ENCODE measurements at regions of chr22 and their contacts with region 1.

Region 1: GRCh38 chr22:23716811-23717801 is 26.3 kb downstream of the RGL4 start:
- DNase-seq: peak; percentile 89
- ATAC-seq: peak; percentile 90
- H3K4me3 Mint-ChIP-seq: peak overlapping the region; percentile 73
- H3K27ac Mint-ChIP-seq: peak overlapping the region; percentile 73
- H3K4me1 Mint-ChIP-seq: peaks cover 24% of the 10 kb centered on the region
- H3K27me3 Mint-ChIP-seq: no peaks in the 10 kb centered on the region

Region 2: DNA sequence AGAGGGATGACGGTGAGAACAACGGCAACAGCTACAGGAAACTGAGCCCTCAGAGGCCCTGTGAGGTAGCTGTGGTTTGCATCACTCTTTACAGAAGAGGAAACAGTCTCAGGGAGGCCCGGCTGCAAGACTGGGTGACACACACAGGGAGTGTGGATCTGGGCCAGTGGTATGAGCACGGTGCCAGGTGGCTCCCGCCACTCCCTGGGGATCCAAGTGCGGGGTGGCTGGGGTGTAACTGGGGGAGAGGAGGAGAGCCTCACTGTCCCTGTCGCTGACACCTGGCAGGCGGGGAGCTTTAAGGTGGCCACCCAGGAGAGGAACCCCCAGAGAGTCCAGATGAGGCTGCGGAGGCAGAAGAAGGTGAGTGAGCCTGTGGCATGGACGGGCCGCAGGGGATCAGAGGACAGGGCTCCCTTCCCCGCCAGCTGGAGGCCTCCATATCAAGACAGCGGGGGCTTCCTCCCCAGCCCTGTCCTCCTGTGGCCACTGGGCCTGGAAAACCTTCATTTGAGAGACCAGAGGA is 20.7 kb before region 1 on chr22:
- CTCF ChIA-PET with region 1: interaction called, 6 read pairs
- POLR2A ChIA-PET with region 1: interaction called, 3 read pairs
- intact Hi-C with region 1: loop called (anchors 1 kb)
- DNase-seq: peak; percentile 91
- ATAC-seq: peak; percentile 100
- H3K4me3 Mint-ChIP-seq: peak overlapping the region; percentile 90
- H3K27ac Mint-ChIP-seq: peak overlapping the region; percentile 100
- H3K4me1 Mint-ChIP-seq: peaks cover 47% of the 10 kb centered on the region
- H3K27me3 Mint-ChIP-seq: no peaks in the 10 kb centered on the region

Region 3: DNA sequence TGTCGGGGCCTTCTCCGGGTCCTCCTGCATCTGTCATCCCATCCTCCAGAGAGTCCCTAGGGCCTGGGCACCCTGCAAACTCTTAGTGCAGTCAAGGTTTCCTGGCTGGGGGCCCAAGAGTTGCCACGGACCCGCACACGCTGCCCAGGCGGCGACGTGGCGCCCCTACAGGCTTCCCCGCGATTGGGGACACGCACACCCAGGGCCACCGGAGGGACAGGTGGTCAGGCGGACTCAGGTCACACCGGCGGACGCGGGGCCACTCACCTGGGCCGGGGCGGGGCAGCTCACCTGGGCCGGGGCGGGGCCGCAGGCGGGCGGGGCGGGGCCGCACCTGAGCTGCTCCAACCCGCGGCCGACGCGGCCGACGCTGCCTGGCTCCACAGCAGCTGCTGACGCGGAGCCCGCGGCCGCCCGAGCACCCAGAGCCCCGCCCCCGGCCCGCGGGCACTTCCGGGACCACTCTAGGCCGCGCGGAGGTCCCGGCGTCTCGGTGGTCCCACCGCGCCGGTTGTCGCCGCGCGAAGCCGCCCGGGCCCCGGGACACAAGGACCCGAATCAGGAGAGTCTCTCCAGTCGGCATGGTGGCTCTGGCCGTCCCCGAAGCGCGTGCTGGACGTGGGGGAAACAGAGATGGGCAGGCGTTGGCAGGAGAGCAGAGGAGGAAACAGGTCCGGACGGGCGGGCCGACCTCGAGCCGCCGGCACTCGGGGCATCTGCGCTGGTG is 33.8 kb after region 1 on chr22 and contains the start of gene ZNF70:
- CTCF ChIA-PET with region 1: no interaction called
- POLR2A ChIA-PET with region 1: interaction called, 6 read pairs
- intact Hi-C with region 1: loop called in 1 of 2 experiments (anchors 1 kb)
- DNase-seq: peak; percentile 91
- ATAC-seq: peak; percentile 99
- H3K4me3 Mint-ChIP-seq: peak within 1 kb of the TSS; percentile 77
- H3K27ac Mint-ChIP-seq: peak within 1 kb of the TSS; percentile 56
- H3K4me1 Mint-ChIP-seq: peaks cover 11% of the 10 kb centered on the region
- H3K27me3 Mint-ChIP-seq: peaks cover 2% of the 10 kb centered on the region
- total RNA-seq, gene ZNF70: 1.6 to 1.7 TPM

Region 4: DNA sequence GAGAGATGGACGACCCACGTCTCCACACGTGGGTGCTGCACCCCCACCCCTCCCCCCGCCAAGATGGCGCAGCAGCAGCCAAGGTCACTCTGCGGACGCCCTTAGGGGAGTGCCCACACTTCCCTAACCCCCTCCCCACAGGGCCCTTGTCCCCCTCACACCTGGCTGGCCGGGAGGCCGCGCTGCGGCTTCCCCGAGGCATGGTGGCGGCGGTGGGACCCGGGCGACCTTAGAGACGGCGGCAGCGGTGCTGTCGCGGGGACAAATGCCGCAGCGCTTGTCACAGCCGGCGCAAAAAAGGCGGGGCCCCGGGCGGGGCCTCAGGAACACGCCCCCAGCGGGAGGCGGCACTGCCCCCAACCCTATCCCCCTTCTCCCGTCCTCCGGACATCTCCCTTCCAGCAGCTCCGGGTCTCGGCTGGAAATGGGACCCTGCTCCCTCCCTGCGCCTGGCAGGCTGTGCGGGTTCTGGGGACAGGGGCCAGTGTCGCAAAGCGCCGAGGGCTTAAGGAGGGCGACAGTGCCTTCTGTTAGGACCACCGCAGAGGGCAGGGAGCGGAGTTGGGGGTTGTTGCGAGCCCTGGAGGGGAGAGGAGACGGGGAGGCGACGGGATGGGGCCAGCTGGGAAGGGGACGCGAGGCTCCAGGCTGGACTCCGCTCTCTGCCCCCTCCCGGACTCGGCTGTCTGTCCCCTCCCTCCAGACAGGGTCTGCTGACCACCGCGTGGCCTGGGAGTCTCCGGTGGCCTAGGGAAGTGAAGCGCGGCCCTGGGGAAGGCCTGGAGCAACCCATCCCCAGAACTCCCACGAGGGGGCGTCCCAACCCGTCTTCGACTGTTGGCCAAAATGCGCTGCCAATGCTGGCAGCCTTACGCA is 50.8 kb after region 1 on chr22 and contains the start of gene CHCHD10:
- CTCF ChIA-PET with region 1: interaction called, 4 read pairs
- POLR2A ChIA-PET with region 1: no interaction called
- intact Hi-C with region 1: loop called in 1 of 2 experiments (anchors 1 kb)
- DNase-seq: peak; percentile 87
- ATAC-seq: peak; percentile 66
- H3K4me3 Mint-ChIP-seq: peak within 1 kb of the TSS; percentile 75
- H3K27ac Mint-ChIP-seq: peak within 1 kb of the TSS; percentile 72
- H3K4me1 Mint-ChIP-seq: peaks cover 36% of the 10 kb centered on the region
- H3K27me3 Mint-ChIP-seq: no peaks in the 10 kb centered on the region
- total RNA-seq, gene CHCHD10: 131 to 134 TPM

Region 5: DNA sequence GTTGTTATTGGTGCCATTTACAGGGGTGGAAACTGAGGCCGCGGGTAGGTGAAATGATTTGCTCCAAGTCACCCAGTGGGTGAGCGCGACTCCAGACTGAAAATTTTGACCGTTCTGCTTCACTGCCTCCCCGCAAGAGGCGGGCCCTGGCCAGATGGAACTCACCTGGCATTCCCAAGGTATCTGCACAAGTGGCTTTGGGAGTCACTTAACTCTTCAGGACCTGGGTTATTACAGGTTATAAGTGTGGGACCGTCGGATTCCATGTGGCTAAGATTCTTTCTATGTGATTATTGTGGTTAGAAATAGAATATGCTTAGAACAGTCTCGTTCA is 294.6 kb after region 1 on chr22:
- CTCF ChIA-PET with region 1: no interaction called
- POLR2A ChIA-PET with region 1: no interaction called
- intact Hi-C with region 1: loop called in 1 of 2 experiments (anchors 10 kb)
- DNase-seq: no peak
- ATAC-seq: no peak
- H3K4me3 Mint-ChIP-seq: peak overlapping the region; percentile 92
- H3K27ac Mint-ChIP-seq: peak overlapping the region; percentile 94
- H3K4me1 Mint-ChIP-seq: peaks cover 27% of the 10 kb centered on the region
- H3K27me3 Mint-ChIP-seq: no peaks in the 10 kb centered on the region

Region 6: GRCh38 chr22:24106385-24107381 is 389.6 kb after region 1 on chr22:
- CTCF ChIA-PET with region 1: no interaction called
- POLR2A ChIA-PET with region 1: no interaction called
- intact Hi-C with region 1: loop called in 1 of 2 experiments (anchors 5 kb)
- DNase-seq: peak; percentile 41
- ATAC-seq: peak; percentile 88
- H3K4me3 Mint-ChIP-seq: no peak overlapping the region
- H3K27ac Mint-ChIP-seq: peak overlapping the region; percentile 69
- H3K4me1 Mint-ChIP-seq: peaks cover 31% of the 10 kb centered on the region
- H3K27me3 Mint-ChIP-seq: no peaks in the 10 kb centered on the region

Region 7: DNA sequence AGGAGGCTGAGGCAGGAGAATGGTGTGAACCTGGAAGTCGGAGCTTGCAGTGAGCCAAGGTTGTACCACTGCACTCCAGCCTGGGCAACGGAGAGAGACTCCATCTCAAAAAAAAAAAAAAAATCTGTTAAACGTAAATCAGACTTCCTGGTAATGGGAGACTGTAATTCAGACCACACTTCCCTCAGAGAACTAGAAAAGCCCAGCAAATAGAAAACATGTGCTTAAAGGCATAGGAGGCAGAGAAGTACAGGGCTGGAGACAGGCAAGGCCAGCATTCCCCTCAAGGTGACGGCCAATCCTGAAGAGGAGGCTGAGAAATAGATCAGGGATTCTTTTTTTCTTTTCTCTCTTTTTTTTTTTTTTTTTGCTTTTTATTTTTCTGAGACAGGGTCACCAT is 519.5 kb after region 1 on chr22:
- CTCF ChIA-PET with region 1: no interaction called
- POLR2A ChIA-PET with region 1: no interaction called
- intact Hi-C with region 1: no loop called
- DNase-seq: no peak
- ATAC-seq: no peak
- H3K4me3 Mint-ChIP-seq: no peak overlapping the region
- H3K27ac Mint-ChIP-seq: no peak overlapping the region
- H3K4me1 Mint-ChIP-seq: peaks cover 10% of the 10 kb centered on the region
- H3K27me3 Mint-ChIP-seq: no peaks in the 10 kb centered on the region